K562 (cell line): ENCODE measurements at regions of chr17 and their contacts with region 1.

Region 1: GRCh38 chr17:67784364-67785121 is 40.8 kb upstream of the BPTF start:
- DNase-seq: peak; percentile 85 to 96 (median 89)
- ATAC-seq: peak; percentile 85
- H3K4me3 ChIP-seq: no peak overlapping the region; the same call in 1 of the 2 replicates
- H3K27ac ChIP-seq: peak overlapping the region; percentile 90
- H3K4me1 ChIP-seq: peaks cover 31 to 33% of the 10 kb centered on the region in 2 experiments
- H3K27me3 ChIP-seq: no peaks in the 10 kb centered on the region
- CTCF ChIP-seq: no peak
- EP300 ChIP-seq: peak; percentile 97
- POLR2A ChIP-seq: no peak
- RAD21 ChIP-seq: peak; percentile 2 to 21; a peak in 1 of 4 replicates

Region 2: DNA sequence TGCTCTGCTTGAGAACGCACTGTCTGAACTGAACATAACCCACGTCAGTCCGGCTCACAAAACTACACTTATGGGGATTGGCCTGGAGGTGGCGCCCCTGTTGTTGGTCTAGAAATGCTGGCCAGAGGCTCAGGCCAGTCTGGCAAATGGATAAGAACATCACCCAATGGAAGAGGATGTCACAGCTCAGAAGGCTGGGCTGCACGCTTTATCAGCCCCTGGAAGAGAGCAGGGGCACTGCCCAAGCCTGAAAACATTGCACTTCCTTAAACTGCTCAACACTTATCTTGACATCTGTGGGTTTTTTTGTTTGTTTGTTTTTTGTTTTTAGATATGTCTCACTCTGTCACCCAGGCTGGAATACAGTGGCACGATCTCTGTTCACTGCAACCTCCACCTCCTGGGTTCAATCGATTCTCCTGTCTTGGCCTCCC is 16.0 kb after region 1 on chr17:
- CTCF ChIA-PET with region 1: no interaction called
- POLR2A ChIA-PET with region 1: interaction called, 16 read pairs
- in situ Hi-C with region 1: no loop called
- intact Hi-C with region 1: no loop called
- DNase-seq: peak; percentile 69 to 90 (median 78)
- ATAC-seq: peak; percentile 95
- H3K4me3 ChIP-seq: no peak overlapping the region
- H3K27ac ChIP-seq: no peak overlapping the region
- H3K4me1 ChIP-seq: peaks cover 9 to 19% of the 10 kb centered on the region in 2 experiments; a peak in 4 of 5 replicates
- H3K27me3 ChIP-seq: no peaks in the 10 kb centered on the region
- CTCF ChIP-seq: peak; percentile 83 to 86 (median 83)
- EP300 ChIP-seq: no peak
- POLR2A ChIP-seq: no peak
- RAD21 ChIP-seq: peak; percentile 74 to 81

Region 3: DNA sequence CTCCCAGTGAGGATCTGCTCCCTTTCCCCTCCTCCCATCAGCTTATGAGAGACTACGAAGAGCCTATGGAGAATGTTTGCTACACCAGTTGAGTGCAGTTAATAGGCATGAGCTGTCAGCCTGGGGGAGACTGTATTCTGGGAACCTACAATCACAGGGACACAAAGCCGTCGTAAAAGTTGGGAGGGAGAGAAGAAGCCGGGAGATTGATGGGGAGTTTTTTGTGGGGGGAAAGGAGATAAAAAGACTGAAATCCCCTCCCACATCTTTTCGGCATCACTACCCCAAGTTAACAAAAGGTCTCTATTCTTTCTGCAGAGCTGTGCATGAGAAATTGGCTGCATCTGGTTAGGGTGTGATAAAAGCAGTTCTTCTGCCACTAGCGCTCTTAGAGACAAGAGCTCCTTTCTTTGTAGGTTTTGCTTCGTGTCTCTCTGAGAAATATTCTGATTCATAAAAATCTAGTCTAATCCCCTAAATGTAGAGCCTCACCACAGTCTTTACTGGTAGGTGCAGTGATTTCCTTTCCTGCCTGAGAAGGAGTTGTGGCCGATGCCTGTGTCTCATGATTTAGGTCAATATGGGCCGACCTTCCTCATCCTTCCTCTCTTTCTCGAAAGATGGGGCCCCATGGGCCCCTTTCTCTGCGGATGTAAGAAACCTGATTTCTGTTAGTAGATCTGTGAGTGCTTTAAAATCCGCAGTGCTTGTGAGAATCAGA is 118.1 kb after region 1 on chr17:
- CTCF ChIA-PET with region 1: no interaction called
- POLR2A ChIA-PET with region 1: no interaction called
- in situ Hi-C with region 1: no loop called
- intact Hi-C with region 1: no loop called
- DNase-seq: no peak
- ATAC-seq: peak; percentile 27; the same call in 2 of the 3 replicates
- H3K4me3 ChIP-seq: no peak overlapping the region
- H3K27ac ChIP-seq: no peak overlapping the region
- H3K4me1 ChIP-seq: no peaks in the 10 kb centered on the region
- H3K27me3 ChIP-seq: no peaks in the 10 kb centered on the region
- CTCF ChIP-seq: no peak
- EP300 ChIP-seq: no peak
- POLR2A ChIP-seq: no peak
- RAD21 ChIP-seq: no peak